Right cardiac atrium (tissue), 5 donors: ENCODE measurements at regions of chr12 and their contacts with region 1.

Region 1: GRCh38 chr12:92145731-92146496 is at the start of gene BTG1:
- DNase-seq: peak; percentile 97 to 99 (median 99)
- ATAC-seq: peak; percentile 92 to 94
- H3K4me3 ChIP-seq: peak within 1 kb of the TSS; percentile 92
- H3K27ac ChIP-seq: peak within 1 kb of the TSS; percentile 98
- H3K4me1 ChIP-seq: no peaks in the 10 kb centered on the region
- H3K27me3 ChIP-seq: no peaks in the 10 kb centered on the region
- total RNA-seq, gene BTG1: 95.7 to 147 (median 134) TPM

Region 2: DNA sequence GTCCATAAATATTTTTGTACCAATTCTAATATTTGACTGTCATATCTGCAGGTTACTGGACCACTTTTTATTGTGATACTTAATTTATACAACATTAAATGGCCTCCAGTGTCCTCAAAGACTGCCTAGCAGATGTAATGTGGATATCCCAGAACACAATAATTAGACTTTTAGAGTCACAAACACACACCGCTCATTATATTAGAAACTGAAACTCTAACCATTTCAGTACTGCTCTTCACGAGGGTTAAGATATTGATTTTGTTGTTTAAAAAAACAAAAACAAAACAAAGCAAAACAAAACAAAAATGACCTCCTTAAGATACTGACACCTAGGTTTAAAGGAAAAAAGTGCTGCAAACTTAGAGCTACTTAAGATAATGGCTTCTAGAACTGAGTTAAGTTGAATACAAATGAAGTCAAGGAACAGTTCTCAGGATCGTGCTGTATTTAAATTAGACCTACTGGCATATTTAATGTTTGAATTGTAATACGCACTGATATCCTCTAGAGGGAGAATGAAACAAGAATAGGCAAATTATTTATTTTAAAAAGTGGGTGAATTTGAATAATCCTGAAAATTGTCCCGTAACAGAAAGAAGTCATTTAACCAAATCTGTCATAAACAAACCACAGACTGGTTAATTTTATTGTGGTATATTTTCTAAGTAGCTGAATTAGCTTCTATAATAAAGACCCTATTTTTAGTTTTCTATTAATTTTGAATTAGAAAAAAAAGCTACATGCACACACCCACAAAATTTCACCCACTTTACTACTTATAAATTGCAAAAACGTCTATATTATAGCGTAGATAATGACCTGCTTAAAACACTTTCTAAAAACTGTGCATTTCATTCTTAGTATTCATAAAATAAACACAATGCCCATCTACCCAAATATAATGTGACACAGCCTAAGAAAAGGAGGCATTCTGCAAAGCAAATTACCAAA is 568.1 kb before region 1 on chr12:
- intact Hi-C with region 1: loop called in 3 of 4 experiments (anchors 10 kb)
- DNase-seq: no peak
- ATAC-seq: peak; percentile 33 to 57
- H3K4me3 ChIP-seq: peak overlapping the region; percentile 36
- H3K27ac ChIP-seq: no peak overlapping the region
- H3K4me1 ChIP-seq: no peaks in the 10 kb centered on the region
- H3K27me3 ChIP-seq: no peaks in the 10 kb centered on the region

Region 3: GRCh38 chr12:91985002-91985787 is 160.7 kb before region 1 on chr12:
- intact Hi-C with region 1: loop called in 1 of 4 experiments (anchors 10 kb)
- DNase-seq: no peak
- ATAC-seq: peak; percentile 30 to 54
- H3K4me3 ChIP-seq: no peak overlapping the region
- H3K27ac ChIP-seq: no peak overlapping the region
- H3K4me1 ChIP-seq: peaks cover 9% of the 10 kb centered on the region
- H3K27me3 ChIP-seq: no peaks in the 10 kb centered on the region

Region 4: DNA sequence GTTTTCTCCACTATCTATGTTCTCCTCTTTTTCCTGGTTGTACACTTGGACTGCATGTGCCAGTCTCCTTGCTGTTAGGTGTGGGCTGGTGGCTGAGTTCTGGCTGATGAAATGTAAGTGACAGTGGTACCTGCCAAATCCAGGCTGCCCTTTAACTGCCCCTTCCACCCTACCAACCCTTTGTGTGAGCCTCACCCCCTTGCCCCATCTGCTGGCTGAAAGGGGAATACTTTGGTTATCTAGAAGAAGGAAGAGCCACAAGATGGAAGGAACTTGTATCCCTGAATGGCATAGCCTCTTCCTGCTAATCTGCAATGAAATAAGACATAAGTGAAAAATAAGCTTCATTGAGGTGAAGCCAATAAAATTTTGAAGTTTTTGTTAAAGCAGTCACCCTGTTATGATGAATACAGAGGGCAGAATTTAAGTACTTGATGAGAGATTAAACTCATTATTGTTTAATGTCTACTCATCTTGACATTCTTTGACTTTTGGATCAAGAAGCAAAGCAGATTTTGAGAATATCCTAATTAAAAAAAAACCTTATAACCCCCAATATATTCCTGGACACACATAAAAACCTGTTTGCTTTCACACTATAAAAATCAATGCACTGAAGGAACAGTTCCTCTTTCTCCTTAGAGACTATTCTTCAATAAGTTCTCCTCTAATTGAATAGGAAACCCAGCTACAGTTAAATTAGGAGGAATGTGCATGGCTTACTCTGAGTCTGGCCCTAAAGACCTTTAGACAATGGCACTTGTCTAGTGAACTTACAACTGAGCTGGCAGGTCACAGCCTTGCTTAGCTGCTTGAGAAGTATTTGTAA is 262.4 kb after region 1 on chr12:
- intact Hi-C with region 1: loop called in 3 of 4 experiments (anchors 10 kb)
- DNase-seq: peak in 2 of 3 donors; percentile 49 to 57
- ATAC-seq: peak; percentile 84 to 87
- H3K4me3 ChIP-seq: no peak overlapping the region
- H3K27ac ChIP-seq: no peak overlapping the region
- H3K4me1 ChIP-seq: peaks cover 3% of the 10 kb centered on the region
- H3K27me3 ChIP-seq: no peaks in the 10 kb centered on the region

Region 5: DNA sequence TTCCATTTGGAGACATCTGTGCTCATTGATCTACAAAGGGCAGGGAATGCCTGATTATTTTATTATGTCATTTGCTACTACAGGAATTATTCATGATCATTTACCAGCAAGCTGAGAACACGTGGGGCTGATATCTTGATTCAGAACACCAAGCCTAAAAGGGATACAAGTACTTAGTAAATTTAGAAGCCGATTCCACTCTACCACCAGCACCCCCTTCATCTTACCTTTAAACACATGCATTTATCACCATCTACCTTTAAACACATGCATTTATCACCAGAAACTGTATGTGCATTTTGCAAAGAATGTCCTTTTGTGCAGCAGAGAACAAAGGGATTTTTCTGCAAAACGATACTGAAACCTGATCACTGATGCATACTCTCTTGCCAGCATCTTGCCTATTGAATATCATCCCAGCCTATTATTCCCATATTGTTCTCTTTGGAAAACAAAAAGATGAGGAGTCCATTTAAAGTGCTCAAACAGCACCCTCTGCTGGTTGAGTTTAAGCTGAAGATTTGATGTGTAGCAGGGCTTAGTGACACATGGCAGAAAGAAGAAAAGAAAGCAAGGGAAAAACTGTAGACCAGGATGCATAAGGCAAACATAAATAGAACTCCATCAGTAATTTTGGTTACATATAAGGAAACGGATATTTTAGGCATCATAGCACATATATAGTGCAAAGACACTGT is 424.3 kb after region 1 on chr12:
- intact Hi-C with region 1: loop called in 2 of 4 experiments (anchors 5 kb)
- DNase-seq: no peak
- ATAC-seq: peak; percentile 73 to 77
- H3K4me3 ChIP-seq: no peak overlapping the region
- H3K27ac ChIP-seq: no peak overlapping the region
- H3K4me1 ChIP-seq: peaks cover 4% of the 10 kb centered on the region
- H3K27me3 ChIP-seq: no peaks in the 10 kb centered on the region